Stomach (tissue), 19 donors: ENCODE measurements at regions of chr7 and their contacts with region 1.

Region 1: GRCh38 chr7:25877802-25878789 is 273.9 kb upstream of the NFE2L3 start:
- DNase-seq: no peak
- H3K4me3 ChIP-seq: no peak overlapping the region
- H3K27ac ChIP-seq: no peak overlapping the region
- H3K4me1 ChIP-seq: no peaks in the 10 kb centered on the region
- H3K27me3 ChIP-seq: peaks cover 0 to 87% (median 21%) of the 10 kb centered on the region in 3 donors
- CTCF ChIP-seq: no peak
- EP300 ChIP-seq: no peak
- POLR2A ChIP-seq: no peak

Region 2: GRCh38 chr7:27179503-27180430 is 1301.7 kb after region 1 on chr7:
- intact Hi-C with region 1: loop called (anchors 10 kb)
- DNase-seq: peak; percentile 47 to 87
- H3K4me3 ChIP-seq: peak overlapping the region in 2 of 4 donors; percentile 13 to 24
- H3K27ac ChIP-seq: no peak overlapping the region
- H3K4me1 ChIP-seq: peaks cover 19 to 31% (median 28%) of the 10 kb centered on the region in 4 donors
- H3K27me3 ChIP-seq: peaks cover 49 to 100% (median 93%) of the 10 kb centered on the region in 3 donors
- CTCF ChIP-seq: peak in 5 of 7 experiments; percentile 10 to 77 (median 54)
- EP300 ChIP-seq: no peak
- POLR2A ChIP-seq: no peak